ENCODE measurements at regions of chrX and their contacts with region 1.

Region 1: DNA sequence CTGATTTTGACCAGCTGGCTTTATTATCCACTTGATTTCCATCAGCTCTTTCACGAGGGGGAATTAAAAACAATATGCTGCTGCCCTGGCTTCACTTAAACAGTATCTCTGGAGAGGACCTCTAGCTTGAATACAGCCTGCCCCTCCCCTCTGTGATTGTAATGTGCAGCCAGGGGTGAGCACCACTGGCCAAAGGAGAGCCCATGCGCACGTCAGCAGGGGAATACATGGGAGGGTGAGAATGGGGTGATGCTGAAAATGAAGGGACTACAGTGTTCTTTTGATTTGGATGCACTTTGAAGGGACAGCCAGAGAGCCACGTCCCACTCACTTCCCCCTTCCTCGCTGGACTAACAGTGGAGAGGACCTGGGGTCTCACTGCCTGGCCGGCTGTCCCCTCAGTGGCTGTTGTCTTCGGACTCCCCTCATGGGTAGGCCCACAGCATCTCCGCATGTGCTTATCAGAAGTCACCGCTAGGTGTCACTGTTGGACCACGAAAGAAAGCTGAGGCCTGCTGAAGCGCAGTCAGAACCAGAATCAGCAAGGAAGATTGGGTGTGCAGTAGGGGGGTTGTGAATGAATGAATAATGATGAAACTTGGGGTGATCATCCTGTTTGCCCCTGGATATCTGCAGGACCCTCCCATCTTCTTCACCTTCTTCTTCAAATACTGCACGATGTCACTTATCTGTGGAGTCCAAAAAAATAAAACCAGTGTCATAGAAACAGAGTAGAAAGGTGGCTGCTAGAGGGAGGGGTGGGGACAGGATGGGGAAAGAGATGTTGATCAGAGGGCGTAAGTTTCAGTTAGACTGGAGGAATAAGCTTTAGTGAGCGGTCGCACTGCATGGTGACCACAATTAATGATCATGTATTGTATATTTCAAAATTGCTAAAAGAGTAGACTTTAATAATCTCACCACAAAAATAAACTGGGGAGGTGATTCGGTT is 32.8 kb downstream of the CLCN4 start:
- DNase-seq: peak; percentile 77
- ATAC-seq: peak; percentile 89
- H3K4me3 Mint-ChIP-seq: no peak overlapping the region
- H3K27ac Mint-ChIP-seq: no peak overlapping the region
- H3K4me1 Mint-ChIP-seq: peaks cover 13% of the 10 kb centered on the region
- H3K27me3 Mint-ChIP-seq: no peaks in the 10 kb centered on the region
- CTCF ChIP-seq: peak; percentile 76

Region 2: DNA sequence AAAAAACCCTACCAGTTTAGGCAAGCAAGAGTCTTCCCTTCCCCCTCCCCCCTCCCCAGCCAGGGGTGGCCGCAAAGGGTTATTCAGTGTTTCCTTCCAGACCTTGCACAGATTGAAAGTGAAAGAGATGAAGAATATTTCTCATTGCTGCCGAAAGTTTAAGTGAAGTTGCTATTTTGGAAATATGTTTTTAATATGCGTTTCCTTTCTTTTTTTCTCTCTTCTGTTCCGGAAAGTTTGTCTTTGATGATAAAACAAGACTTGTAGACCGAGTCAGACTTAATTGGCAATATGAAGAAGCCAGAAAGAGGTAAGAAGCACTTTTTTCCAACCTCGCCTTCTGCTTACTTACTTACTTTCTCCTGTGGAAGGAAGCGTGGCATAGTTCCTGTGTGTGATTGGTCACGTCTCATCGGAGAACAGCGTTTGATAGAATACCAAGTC is 91.3 kb before region 1 on chrX:
- CTCF ChIA-PET with region 1: no interaction called
- POLR2A ChIA-PET with region 1: no interaction called
- DNase-seq: no peak
- ATAC-seq: no peak
- H3K4me3 Mint-ChIP-seq: no peak overlapping the region
- H3K27ac Mint-ChIP-seq: no peak overlapping the region
- H3K4me1 Mint-ChIP-seq: peaks cover 2% of the 10 kb centered on the region; the same call in 1 of the 2 replicates
- H3K27me3 Mint-ChIP-seq: no peaks in the 10 kb centered on the region
- CTCF ChIP-seq: no peak

Region 3: GRCh38 chrX:10597871-10598270 is 408.3 kb after region 1 on chrX:
- CTCF ChIA-PET with region 1: interaction called, 10 read pairs
- POLR2A ChIA-PET with region 1: no interaction called
- DNase-seq: peak; percentile 25
- ATAC-seq: peak; percentile 78
- H3K4me3 Mint-ChIP-seq: no peak overlapping the region
- H3K27ac Mint-ChIP-seq: no peak overlapping the region
- H3K4me1 Mint-ChIP-seq: peaks cover 53% of the 10 kb centered on the region
- H3K27me3 Mint-ChIP-seq: no peaks in the 10 kb centered on the region
- CTCF ChIP-seq: no peak

Region 4: GRCh38 chrX:10636337-10636736 is 446.7 kb after region 1 on chrX:
- CTCF ChIA-PET with region 1: interaction called, 10 read pairs
- POLR2A ChIA-PET with region 1: no interaction called
- DNase-seq: peak; percentile 18
- ATAC-seq: peak; percentile 73
- H3K4me3 Mint-ChIP-seq: no peak overlapping the region
- H3K27ac Mint-ChIP-seq: no peak overlapping the region
- H3K4me1 Mint-ChIP-seq: peaks cover 16% of the 10 kb centered on the region
- H3K27me3 Mint-ChIP-seq: no peaks in the 10 kb centered on the region
- CTCF ChIP-seq: no peak

Region 5: DNA sequence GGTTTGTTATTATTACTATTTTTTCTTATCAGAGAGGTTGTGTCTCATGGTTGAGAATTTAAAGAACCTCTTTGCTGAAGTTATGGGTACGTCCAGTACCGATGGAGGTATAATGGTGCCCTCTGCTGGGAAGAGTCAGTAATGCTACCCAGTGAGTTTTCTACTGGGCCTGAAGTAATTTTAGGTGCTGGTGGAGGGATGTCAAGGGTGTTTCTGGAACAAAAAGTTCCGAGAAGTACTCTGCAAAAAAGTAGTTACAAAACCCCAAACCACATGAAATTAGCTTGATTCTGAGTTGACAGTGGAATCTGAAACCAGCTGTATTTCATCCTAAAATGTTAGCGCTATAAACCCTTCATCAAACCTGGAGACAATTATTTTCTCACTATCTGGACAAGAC is 533.3 kb after region 1 on chrX:
- CTCF ChIA-PET with region 1: interaction called, 14 read pairs
- POLR2A ChIA-PET with region 1: no interaction called
- DNase-seq: peak; percentile 67
- ATAC-seq: peak; percentile 75
- H3K4me3 Mint-ChIP-seq: no peak overlapping the region
- H3K27ac Mint-ChIP-seq: no peak overlapping the region
- H3K4me1 Mint-ChIP-seq: peaks cover 15% of the 10 kb centered on the region
- H3K27me3 Mint-ChIP-seq: no peaks in the 10 kb centered on the region
- CTCF ChIP-seq: peak; percentile 42

Measured in WTC11 (cell line).